ENCODE measurements at regions of chr11 and their contacts with region 1.

Region 1: GRCh38 chr11:45964911-45965389 is 42.5 kb downstream of the LARGE2 start:
- DNase-seq: peak; percentile 42 to 45
- ATAC-seq: peak; percentile 87

Region 2: DNA sequence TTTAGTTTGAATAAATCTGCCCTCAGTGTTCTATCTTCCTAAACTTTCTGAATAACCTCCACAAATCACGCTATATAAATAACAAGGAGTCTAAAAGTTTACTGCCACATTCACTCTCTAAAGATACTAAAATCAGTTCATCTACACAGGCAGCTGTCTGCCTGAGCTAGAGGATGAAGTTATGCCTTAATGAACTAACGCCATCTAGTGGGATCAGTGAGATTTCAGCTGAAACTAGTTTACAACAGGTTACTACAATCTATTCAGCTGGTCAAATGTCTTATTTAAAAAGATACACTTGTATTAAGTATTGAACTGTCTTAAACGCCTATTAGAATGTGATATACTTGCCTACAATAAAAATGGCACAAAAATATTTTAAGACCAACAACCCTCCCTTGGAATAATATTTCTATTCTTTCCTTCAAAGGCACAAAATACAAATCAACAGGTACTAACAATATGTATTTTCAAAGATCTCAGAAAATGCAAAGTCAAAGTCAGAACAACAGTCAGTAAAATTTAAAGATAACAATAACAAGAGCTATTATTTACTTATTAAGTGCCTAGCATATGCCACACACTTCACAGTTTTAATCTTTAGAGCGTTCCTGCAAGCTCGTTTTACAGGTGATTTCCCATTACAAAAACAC is 41.6 kb after region 1 on chr11:
- intact Hi-C with region 1: loop called in 1 of 2 experiments (anchors 2 kb)
- DNase-seq: no peak
- ATAC-seq: peak; percentile 89

Region 3: GRCh38 chr11:46036969-46037368 is 72.0 kb after region 1 on chr11:
- intact Hi-C with region 1: no loop called
- DNase-seq: no peak
- ATAC-seq: no peak

Measured in left colon (tissue), 2 donors.